ENCODE measurements at regions of chr18 and their contacts with region 1.

Region 1: DNA sequence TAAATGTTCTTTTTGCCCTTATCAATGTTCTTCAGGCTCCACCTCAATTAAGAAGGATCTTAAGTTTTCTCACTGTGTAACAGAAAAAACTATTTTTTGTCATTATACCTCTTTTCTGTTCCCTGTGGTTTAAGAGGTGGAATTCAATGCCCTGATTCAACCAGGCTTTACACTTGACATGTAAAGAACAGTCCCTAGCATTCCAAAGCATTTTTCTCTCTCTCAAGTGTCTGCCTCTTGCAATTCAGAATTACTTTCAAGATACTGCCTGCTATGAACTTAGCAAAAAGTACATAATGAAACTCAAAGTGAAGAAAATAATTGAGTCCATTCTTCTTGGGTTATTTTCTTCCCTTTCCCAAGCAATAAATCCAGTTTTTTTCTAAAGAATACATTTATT is 160.6 kb upstream of the NOL4 start:
- DNase-seq: no peak
- H3K4me3 ChIP-seq: no peak overlapping the region
- H3K27ac ChIP-seq: no peak overlapping the region
- H3K4me1 ChIP-seq: no peaks in the 10 kb centered on the region
- H3K27me3 ChIP-seq: no peaks in the 10 kb centered on the region
- CTCF ChIP-seq: no peak

Region 2: DNA sequence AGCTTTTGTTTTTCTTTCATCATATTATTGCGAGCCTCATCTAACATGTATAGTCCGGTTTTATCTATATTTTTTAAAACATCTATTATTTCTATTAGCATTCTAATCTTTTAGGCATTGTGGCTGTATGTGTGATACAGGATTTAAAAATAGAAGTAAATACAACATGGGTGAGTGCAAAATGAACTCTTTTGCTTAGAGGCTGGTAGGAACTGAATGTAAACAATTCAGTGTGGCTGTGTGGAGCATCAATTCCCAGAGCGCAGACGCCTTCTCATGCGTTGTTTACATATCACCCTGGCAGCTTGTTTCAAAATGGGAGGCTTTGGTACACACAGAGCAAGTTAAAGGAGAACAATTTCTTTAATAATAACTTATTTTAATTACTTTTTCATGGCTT is 325.6 kb after region 1 on chr18:
- CTCF ChIA-PET with region 1: no interaction called
- POLR2A ChIA-PET with region 1: interaction called, 13 read pairs
- intact Hi-C with region 1: no loop called
- DNase-seq: peak; percentile 66
- H3K4me3 ChIP-seq: peak overlapping the region; percentile 44
- H3K27ac ChIP-seq: peak overlapping the region; percentile 35
- H3K4me1 ChIP-seq: peaks cover 50% of the 10 kb centered on the region
- H3K27me3 ChIP-seq: no peaks in the 10 kb centered on the region
- CTCF ChIP-seq: no peak